ENCODE measurements at regions of chr2 and their contacts with region 1.

Region 1: GRCh38 chr2:203327901-203328759 is at the start of gene ABI2:
- DNase-seq: peak; percentile 89
- ATAC-seq: peak; percentile 95
- total RNA-seq, gene ABI2: 43.5 TPM

Region 2: GRCh38 chr2:203238704-203239526 is 89.2 kb before region 1 on chr2 and contains the start of gene CYP20A1:
- intact Hi-C with region 1: loop called (anchors 5 kb)
- DNase-seq: peak; percentile 98
- ATAC-seq: peak; percentile 99
- total RNA-seq, gene CYP20A1: 11.4 TPM

Region 3: GRCh38 chr2:203412546-203413331 is 84.6 kb after region 1 on chr2:
- intact Hi-C with region 1: loop called (anchors 5 kb)
- DNase-seq: no peak
- ATAC-seq: peak; percentile 94

Region 4: DNA sequence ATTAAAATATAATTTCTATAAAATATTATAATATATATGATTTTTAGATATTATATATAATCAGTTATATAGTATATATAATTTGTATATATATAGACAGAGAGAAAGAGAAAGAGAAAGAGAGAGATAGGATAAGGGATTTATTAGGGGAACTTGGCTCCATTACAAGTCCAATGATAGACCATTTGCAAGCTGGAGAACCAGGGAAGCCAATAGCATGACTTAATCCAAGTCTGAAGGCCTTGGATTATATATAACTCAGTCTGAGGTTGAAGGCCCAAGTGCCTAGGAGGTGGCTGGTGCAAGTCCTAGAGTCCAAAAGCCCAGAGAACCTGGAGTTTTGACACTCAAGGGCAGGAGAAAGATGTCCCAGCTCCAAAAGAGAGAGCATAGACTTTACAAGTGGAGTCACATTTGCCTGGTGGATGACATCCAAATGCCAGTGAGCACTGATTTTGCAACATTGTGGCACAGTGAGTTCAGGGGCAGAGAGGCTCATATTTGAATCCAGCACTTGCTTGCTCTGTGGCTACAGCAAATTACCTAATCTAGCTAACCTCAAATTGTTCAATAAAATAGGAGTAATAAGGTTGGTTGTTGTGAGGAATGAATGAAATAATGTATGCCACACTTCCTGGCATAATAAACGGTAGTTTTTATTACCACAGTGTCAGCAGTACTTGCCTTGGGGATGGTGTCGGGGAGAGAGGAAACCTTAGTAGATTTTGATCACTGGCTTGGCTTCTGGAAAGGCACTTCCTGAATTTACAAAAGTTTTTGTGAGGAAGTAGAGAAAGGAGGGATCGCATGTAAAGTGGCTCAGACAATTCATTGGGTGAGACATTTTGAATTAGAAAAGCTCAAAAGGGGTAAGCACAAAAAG is 308.7 kb after region 1 on chr2:
- intact Hi-C with region 1: no loop called
- DNase-seq: no peak
- ATAC-seq: peak; percentile 88